T-cell (primary cell): ENCODE measurements at regions of chr13 and their contacts with region 1.

Region 1: DNA sequence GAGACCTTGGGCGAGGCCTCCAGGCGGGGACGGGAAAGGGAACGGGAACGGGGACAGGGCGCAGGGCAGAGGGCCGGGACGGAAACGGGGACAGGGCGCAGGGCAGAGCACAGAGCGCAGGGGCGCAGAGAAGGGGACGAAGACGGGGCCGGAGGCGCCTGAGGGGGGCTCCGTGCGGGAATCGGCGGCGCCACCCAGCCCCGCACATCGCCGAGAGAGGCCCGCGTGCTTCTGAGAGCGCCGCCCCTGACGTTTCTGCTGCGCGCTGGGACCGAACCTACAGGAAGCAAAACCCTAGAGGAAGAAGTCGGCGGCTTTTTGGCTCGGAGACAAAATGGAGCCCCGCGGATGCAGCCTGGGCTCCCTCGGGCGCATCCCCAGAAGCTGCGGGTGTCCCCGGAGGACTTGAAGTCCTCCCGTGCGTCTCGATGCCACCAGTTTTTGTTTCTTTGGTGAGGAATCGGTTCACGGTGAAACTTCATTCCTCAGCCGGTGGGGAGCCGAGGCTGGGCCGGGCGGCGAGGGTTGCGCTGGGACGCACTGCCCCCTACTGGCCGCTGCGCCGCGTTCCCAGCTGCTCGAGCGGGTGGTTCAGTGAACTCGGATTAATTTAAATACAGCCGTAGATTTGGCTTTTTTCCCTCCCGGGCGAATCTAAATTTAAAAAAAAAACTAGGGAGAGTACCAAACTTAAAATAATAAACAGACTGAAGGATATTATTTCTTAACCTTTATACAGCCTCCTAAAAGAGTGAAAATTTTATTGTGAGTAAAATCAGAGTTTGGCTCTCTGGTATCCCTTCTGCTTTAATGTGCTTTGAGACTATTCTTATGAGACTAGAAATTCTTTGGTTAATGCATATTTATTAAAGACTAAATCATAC is 350.0 kb upstream of the ARGLU1 start:
- DNase-seq: peak; percentile 2 to 72 (median 42)
- ATAC-seq: peak; percentile 78 to 87 (median 81)
- H3K4me3 ChIP-seq: peak overlapping the region; percentile 62 to 92
- H3K4me3 Mint-ChIP-seq: peak overlapping the region; percentile 72 to 74 (median 72)
- H3K27ac ChIP-seq: no peak overlapping the region
- H3K27ac Mint-ChIP-seq: no peak overlapping the region
- H3K4me1 ChIP-seq: peaks cover 2 to 12% of the 10 kb centered on the region in 2 experiments
- H3K4me1 Mint-ChIP-seq: peaks cover 11 to 16% (median 11%) of the 10 kb centered on the region in 3 donors
- H3K27me3 ChIP-seq: peaks cover 0 to 22% of the 10 kb centered on the region in 2 experiments
- H3K27me3 Mint-ChIP-seq: peaks cover 25 to 27% of the 10 kb centered on the region in 2 donors

Region 2: DNA sequence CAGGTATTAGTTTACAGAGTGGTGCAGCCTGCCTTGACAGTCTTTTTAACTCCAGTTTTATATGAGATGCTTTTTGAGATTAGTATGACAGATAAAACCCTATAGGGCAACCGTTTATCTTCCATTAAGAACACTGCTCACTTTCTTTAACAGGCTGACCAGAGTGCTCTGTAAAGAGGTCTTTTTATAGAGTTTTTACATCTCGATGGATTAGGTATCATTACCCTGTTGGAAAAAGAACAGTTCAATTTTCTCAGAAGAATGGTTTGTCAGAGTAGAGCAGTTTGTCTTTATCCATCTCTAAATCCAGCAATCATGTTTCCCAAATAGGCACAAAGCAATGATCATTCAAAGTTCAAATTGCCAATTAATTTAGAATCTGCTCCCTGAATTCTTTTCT is 45.2 kb after region 1 on chr13:
- CTCF ChIA-PET with region 1: no interaction called
- POLR2A ChIA-PET with region 1: no interaction called
- DNase-seq: no peak
- ATAC-seq: no peak
- H3K4me3 ChIP-seq: no peak overlapping the region
- H3K4me3 Mint-ChIP-seq: no peak overlapping the region
- H3K27ac ChIP-seq: no peak overlapping the region
- H3K27ac Mint-ChIP-seq: no peak overlapping the region
- H3K4me1 ChIP-seq: no peaks in the 10 kb centered on the region
- H3K4me1 Mint-ChIP-seq: no peaks in the 10 kb centered on the region
- H3K27me3 ChIP-seq: no peaks in the 10 kb centered on the region
- H3K27me3 Mint-ChIP-seq: no peaks in the 10 kb centered on the region

Region 3: DNA sequence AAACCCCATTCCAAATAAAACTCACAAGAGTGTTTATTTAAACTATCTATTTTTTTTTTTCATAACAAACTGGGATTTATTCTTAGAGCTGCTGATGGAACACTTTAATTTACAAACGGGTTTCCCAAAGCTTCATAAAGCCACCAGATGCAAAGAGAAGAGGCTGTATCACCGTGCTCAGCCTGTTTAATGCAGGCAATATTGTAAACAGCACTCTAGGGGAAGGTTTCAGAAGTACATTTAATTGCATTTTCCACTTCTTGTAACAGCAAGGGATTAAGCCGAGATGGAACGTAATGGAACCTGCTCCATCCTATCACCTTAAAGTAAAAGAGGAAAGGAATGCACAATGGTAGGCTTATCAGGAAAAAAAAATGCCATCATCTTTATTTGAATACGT is 200.6 kb after region 1 on chr13:
- CTCF ChIA-PET with region 1: no interaction called
- POLR2A ChIA-PET with region 1: interaction called in 1 of 2 experiments, 13 read pairs
- DNase-seq: no peak
- ATAC-seq: no peak
- H3K4me3 ChIP-seq: no peak overlapping the region
- H3K4me3 Mint-ChIP-seq: no peak overlapping the region
- H3K27ac ChIP-seq: no peak overlapping the region
- H3K27ac Mint-ChIP-seq: no peak overlapping the region
- H3K4me1 ChIP-seq: no peaks in the 10 kb centered on the region
- H3K4me1 Mint-ChIP-seq: no peaks in the 10 kb centered on the region
- H3K27me3 ChIP-seq: no peaks in the 10 kb centered on the region
- H3K27me3 Mint-ChIP-seq: peaks cover 0 to 6% of the 10 kb centered on the region in 2 donors